Caco-2 (cell line): ENCODE measurements at regions of chr14 and their contacts with region 1.

Region 1: DNA sequence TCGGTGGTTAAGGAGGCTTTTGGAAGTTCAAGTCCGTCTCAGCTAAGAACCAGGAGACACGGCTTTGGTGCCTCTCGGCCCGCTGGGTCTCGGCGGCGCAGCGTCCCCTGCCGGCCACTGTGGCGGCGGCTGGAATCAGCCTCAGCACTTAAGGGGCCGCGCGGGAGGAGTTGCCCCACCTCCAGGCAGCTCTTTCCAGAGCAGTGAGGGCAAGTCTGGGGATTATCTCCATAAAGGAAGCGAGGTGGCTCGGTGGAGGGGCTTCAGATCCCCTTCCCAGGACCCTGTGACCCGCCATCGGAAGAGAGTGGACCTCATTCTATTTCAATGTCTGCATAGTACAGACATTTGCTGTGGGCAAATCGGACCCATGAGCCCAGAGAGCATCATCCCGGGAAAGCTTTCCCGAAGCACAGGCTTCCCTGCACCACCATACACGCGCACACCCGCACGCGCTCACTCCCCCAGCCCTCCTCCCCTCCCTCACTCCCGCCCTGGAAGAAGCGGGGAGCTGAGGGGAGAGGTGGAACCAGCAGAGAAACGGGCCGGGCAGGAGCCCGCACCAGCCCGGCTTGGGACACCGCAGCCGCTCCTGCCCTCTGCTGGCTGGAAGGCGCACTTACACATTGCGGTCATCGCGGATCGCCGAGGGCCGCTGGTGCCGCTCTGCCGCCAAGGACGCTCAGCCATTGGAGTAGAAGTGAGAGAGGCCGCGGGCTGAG is 15.9 kb downstream of the RNASE2 start:
- DNase-seq: peak; percentile 84 to 92
- H3K4me3 ChIP-seq: peak overlapping the region; percentile 71
- H3K4me3 Mint-ChIP-seq: peak overlapping the region; percentile 88
- H3K27ac Mint-ChIP-seq: peak overlapping the region; percentile 66
- H3K4me1 ChIP-seq: peaks cover 29% of the 10 kb centered on the region
- H3K4me1 Mint-ChIP-seq: peaks cover 23% of the 10 kb centered on the region
- H3K27me3 ChIP-seq: no peaks in the 10 kb centered on the region
- H3K27me3 Mint-ChIP-seq: peaks cover 11% of the 10 kb centered on the region
- CTCF ChIP-seq: peak; percentile 75 to 99

Region 2: GRCh38 chr14:20818861-20819260 is 152.3 kb before region 1 on chr14:
- CTCF ChIA-PET with region 1: interaction called, 10 read pairs
- POLR2A ChIA-PET with region 1: no interaction called
- intact Hi-C with region 1: no loop called
- DNase-seq: peak in 1 of 2 experiments; percentile 28
- H3K4me3 ChIP-seq: no peak overlapping the region
- H3K4me3 Mint-ChIP-seq: no peak overlapping the region
- H3K27ac Mint-ChIP-seq: no peak overlapping the region
- H3K4me1 ChIP-seq: peaks cover 4% of the 10 kb centered on the region; the same call in 1 of the 2 replicates
- H3K4me1 Mint-ChIP-seq: peaks cover 27% of the 10 kb centered on the region
- H3K27me3 ChIP-seq: no peaks in the 10 kb centered on the region
- H3K27me3 Mint-ChIP-seq: no peaks in the 10 kb centered on the region
- CTCF ChIP-seq: peak; percentile 10 to 37

Region 3: DNA sequence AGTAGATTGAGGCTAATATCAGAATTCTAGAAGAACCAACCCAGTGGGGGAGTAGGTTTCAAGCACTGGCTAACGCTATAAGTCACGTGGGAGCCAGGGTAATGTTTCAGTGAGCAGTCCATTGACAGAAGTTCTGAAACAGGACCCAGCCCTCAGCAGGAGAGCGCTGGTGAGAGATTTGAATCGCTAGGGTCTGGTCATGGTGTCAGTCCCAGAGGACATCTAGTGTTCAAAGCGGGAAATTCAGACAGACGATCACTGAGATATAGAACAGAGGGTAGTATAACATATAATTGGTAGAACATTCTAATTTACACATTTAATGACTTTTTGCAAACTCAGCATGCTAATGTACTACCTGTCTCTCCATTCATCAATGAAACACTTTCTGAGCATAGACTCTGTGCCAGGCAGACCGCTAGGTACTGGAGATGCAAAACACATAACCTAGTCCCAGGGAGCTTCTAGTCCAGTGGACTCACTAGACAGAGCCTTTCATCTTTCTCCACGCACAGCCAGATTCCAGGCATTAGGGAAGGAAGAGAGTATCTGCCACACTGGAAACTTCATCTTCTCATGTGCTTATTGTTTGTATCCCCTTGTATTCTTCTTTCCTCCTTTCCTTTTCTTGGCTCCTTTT is 115.4 kb before region 1 on chr14:
- CTCF ChIA-PET with region 1: interaction called, 45 read pairs
- POLR2A ChIA-PET with region 1: no interaction called
- intact Hi-C with region 1: loop called (anchors 1 kb)
- DNase-seq: peak; percentile 77 to 80
- H3K4me3 ChIP-seq: no peak overlapping the region
- H3K4me3 Mint-ChIP-seq: no peak overlapping the region
- H3K27ac Mint-ChIP-seq: no peak overlapping the region
- H3K4me1 ChIP-seq: peaks cover 6% of the 10 kb centered on the region
- H3K4me1 Mint-ChIP-seq: peaks cover 20% of the 10 kb centered on the region
- H3K27me3 ChIP-seq: no peaks in the 10 kb centered on the region
- H3K27me3 Mint-ChIP-seq: no peaks in the 10 kb centered on the region
- CTCF ChIP-seq: peak; percentile 73 to 76

Region 4: GRCh38 chr14:20982646-20983369 is 11.7 kb after region 1 on chr14:
- CTCF ChIA-PET with region 1: interaction called, 11 read pairs
- POLR2A ChIA-PET with region 1: no interaction called
- intact Hi-C with region 1: no loop called
- DNase-seq: no peak
- H3K4me3 ChIP-seq: no peak overlapping the region
- H3K4me3 Mint-ChIP-seq: no peak overlapping the region
- H3K27ac Mint-ChIP-seq: no peak overlapping the region
- H3K4me1 ChIP-seq: peaks cover 9% of the 10 kb centered on the region; the same call in 1 of the 2 replicates
- H3K4me1 Mint-ChIP-seq: peaks cover under 1% of the 10 kb centered on the region
- H3K27me3 ChIP-seq: no peaks in the 10 kb centered on the region
- H3K27me3 Mint-ChIP-seq: no peaks in the 10 kb centered on the region
- CTCF ChIP-seq: no peak

Region 5: DNA sequence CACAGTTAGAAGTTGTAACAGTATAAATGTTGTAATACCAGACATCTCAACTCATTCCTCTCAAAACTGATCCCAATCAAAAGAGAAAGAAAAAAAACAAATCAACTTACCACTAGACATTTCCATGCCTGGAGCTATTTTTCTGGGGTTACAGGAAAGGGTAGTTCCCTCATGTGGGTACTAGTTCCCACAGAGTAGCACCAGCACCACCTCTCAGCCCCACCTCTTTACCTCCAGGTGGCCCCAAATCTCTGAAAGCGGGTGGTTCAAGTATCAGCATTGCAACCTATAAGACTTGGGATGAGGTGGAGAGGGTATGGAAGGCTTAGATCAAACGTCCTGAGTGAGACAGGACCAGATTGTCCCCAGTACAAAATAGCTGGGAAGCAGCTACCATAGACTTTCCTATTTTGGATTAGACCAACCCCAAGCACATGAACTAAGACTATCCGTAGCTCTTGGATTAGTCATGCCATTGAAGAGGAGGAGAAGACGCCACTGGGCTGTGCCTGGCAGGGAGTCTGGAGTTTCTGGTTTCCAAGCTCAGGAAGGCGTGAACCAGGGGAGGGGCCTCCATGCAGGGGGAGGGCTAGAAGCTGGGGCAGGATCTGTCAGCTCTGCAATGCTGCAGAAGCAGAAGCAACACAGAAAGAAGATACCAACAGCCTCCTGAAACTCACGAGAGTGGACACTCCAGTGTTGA is 27.7 kb after region 1 on chr14 and contains the start of gene SLC39A2:
- CTCF ChIA-PET with region 1: interaction called, 22 read pairs
- POLR2A ChIA-PET with region 1: no interaction called
- intact Hi-C with region 1: no loop called
- DNase-seq: no peak
- H3K4me3 ChIP-seq: no peak within 1 kb of the TSS
- H3K4me3 Mint-ChIP-seq: no peak within 1 kb of the TSS
- H3K27ac Mint-ChIP-seq: no peak within 1 kb of the TSS
- H3K4me1 ChIP-seq: peaks cover 17% of the 10 kb centered on the region; the same call in 1 of the 2 replicates
- H3K4me1 Mint-ChIP-seq: peaks cover 9% of the 10 kb centered on the region
- H3K27me3 ChIP-seq: no peaks in the 10 kb centered on the region
- H3K27me3 Mint-ChIP-seq: no peaks in the 10 kb centered on the region
- CTCF ChIP-seq: no peak
- total RNA-seq, gene SLC39A2: 0.81 and 0.88 TPM in 2 replicates